Activated CD4-positive, alpha-beta T cell treated with anti-CD3 and anti-CD28 coated beads, Interleukin-2, amount 10 ng/mL, durations not matched to agents 7 days and 5 days (primary cell): ENCODE measurements at regions of chr10 and their contacts with region 1.

Region 1: DNA sequence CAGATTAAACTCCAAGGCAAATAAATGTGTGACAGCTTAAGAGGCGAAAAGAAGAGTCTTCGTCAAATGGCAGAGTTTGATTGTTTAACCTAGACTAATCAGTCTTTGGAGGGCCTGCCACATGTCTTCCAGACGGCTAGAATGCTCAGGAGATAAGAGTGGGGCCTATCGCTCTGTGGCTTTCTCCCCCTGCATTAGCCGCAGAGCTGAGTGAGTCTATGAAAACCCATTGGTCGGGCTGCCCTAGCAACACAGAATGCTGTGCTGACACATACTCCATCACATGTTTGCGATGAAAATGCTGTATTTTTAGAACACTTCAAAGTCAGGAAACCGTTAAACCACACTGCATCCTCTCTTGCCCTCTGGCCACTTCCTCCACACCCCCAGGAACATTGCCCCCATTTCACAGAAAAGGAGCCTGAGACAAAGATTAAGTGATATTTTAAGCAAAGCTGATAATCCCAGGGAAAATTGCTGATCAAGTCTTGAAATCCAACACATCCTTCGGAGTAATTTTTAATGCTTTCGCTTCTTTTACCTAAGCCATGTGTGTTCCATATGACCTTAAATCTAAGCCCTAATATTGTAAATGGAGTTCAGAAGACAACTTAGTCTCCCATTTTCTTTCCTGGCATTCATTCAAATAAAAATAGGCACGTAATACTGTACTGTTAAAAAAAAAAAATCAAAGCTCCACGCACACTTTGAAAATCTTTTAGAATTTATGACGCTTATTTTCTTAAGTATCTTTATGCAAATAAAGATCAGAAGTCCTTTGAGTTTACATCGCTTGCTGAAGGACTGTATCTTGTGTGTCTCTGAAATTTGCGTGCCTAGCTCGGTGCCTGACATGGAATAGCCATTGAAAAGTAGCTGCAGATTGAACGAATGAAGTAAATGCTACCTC is 161.2 kb downstream of the CELF2 start:
- DNase-seq: peak; percentile 93
- H3K4me3 Mint-ChIP-seq: no peak overlapping the region
- H3K27ac Mint-ChIP-seq: peak overlapping the region; percentile 91
- H3K4me1 Mint-ChIP-seq: peaks cover 98% of the 10 kb centered on the region
- H3K27me3 Mint-ChIP-seq: no peaks in the 10 kb centered on the region

Region 2: GRCh38 chr10:11165591-11166543 is 13.0 kb before region 1 on chr10:
- CTCF ChIA-PET with region 1: interaction called, 40 read pairs
- POLR2A ChIA-PET with region 1: interaction called, 29 read pairs
- DNase-seq: peak; percentile 84
- H3K4me3 Mint-ChIP-seq: no peak overlapping the region
- H3K27ac Mint-ChIP-seq: peak overlapping the region; percentile 99
- H3K4me1 Mint-ChIP-seq: peaks cover 36% of the 10 kb centered on the region
- H3K27me3 Mint-ChIP-seq: no peaks in the 10 kb centered on the region